GM12878 (cell line): ENCODE measurements at regions of chr1 and their contacts with region 1.

Region 1: DNA sequence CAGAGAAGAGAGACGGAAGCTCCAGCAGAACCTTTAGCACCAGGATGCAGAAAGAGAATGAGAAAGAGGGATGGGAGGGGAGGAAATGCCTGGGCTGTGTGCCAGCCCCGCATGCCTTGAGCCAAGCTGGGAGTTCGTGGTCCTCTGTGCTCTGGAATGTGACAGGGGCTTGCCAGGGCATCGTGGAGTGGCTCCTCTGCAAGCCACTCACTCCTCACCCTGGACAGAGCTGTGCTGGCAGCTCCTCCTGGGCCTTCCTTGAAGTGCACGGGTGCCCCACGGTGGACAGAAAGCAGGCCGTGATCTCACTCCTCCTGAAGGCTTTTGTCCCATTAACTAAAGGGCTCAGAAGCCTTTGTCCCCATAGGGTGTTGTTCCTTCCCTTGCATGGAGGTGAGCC is 34.8 kb upstream of the PRELP start:
- DNase-seq: no peak
- ATAC-seq: peak; percentile 95
- H3K4me3 ChIP-seq: no peak overlapping the region
- H3K27ac ChIP-seq: no peak overlapping the region
- H3K4me1 ChIP-seq: no peaks in the 10 kb centered on the region
- H3K27me3 ChIP-seq: peaks cover 0 to 3% of the 10 kb centered on the region in 2 experiments; a peak in 2 of 4 replicates
- CTCF ChIP-seq: peak; percentile 31 to 77 (median 52); a peak in 4 of 6 replicates
- EP300 ChIP-seq: no peak
- POLR2A ChIP-seq: no peak
- RAD21 ChIP-seq: peak; percentile 82

Region 2: GRCh38 chr1:203361945-203362719 is 78.6 kb before region 1 on chr1:
- CTCF ChIA-PET with region 1: interaction called, 31 read pairs
- POLR2A ChIA-PET with region 1: interaction called, 3 read pairs
- RAD21 ChIA-PET with region 1: interaction called, 20 read pairs
- SMC1A ChIA-PET with region 1: interaction called, 26 read pairs
- in situ Hi-C with region 1: no loop called
- intact Hi-C with region 1: no loop called
- DNase-seq: no peak
- ATAC-seq: peak; percentile 91
- H3K4me3 ChIP-seq: no peak overlapping the region
- H3K27ac ChIP-seq: no peak overlapping the region
- H3K4me1 ChIP-seq: no peaks in the 10 kb centered on the region
- H3K27me3 ChIP-seq: peaks cover 0 to 5% of the 10 kb centered on the region in 2 experiments; a peak in 3 of 4 replicates
- CTCF ChIP-seq: no peak
- EP300 ChIP-seq: no peak
- POLR2A ChIP-seq: no peak
- RAD21 ChIP-seq: no peak

Region 3: GRCh38 chr1:203428981-203429599 is 11.7 kb before region 1 on chr1:
- CTCF ChIA-PET with region 1: interaction called, 18 read pairs
- POLR2A ChIA-PET with region 1: no interaction called
- RAD21 ChIA-PET with region 1: interaction called, 23 read pairs
- SMC1A ChIA-PET with region 1: interaction called, 14 read pairs
- in situ Hi-C with region 1: no loop called
- intact Hi-C with region 1: no loop called
- DNase-seq: peak; percentile 70
- ATAC-seq: peak; percentile 97
- H3K4me3 ChIP-seq: no peak overlapping the region
- H3K27ac ChIP-seq: peak overlapping the region; percentile 70
- H3K4me1 ChIP-seq: peaks cover 13% of the 10 kb centered on the region
- H3K27me3 ChIP-seq: no peaks in the 10 kb centered on the region
- CTCF ChIP-seq: no peak
- EP300 ChIP-seq: peak in 1 of 2 experiments; percentile 48; a peak in 1 of 4 replicates
- POLR2A ChIP-seq: 0 out of 2 replicates have a peak, but pooled peaks have one; percentile 22
- RAD21 ChIP-seq: no peak

Region 4: DNA sequence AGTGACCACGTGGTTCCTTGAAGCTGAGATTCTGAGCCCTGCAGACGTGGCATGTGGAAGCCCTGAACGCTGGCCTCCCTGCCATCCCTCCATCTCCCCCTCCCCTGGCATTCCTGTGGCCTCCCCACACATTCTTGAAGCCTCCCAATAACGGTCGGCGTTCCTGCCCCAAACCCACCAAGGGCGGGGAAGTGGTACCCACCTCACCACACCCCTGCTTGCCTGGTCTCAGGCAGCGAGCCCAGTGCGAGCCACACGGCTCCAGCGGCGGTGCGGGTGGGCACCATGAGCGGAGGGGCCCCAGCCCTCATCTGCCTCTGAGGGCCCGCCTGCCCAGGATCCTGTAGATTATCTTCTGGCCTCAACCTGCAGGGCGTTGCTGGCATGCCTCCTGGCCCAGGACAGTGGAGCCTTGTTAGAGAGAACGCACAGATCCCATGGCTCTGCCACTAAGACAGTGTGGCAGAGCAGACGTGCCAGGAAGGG is 14.3 kb after region 1 on chr1:
- CTCF ChIA-PET with region 1: interaction called, 17 read pairs
- POLR2A ChIA-PET with region 1: no interaction called
- RAD21 ChIA-PET with region 1: interaction called, 5 read pairs
- SMC1A ChIA-PET with region 1: interaction called, 10 read pairs
- in situ Hi-C with region 1: no loop called
- intact Hi-C with region 1: no loop called
- DNase-seq: no peak
- ATAC-seq: no peak
- H3K4me3 ChIP-seq: no peak overlapping the region
- H3K27ac ChIP-seq: no peak overlapping the region
- H3K4me1 ChIP-seq: peaks cover 3% of the 10 kb centered on the region; the same call in 1 of the 2 replicates
- H3K27me3 ChIP-seq: no peaks in the 10 kb centered on the region
- CTCF ChIP-seq: no peak
- EP300 ChIP-seq: no peak
- POLR2A ChIP-seq: no peak
- RAD21 ChIP-seq: no peak

Region 5: GRCh38 chr1:203475012-203475981 is 34.5 kb after region 1 on chr1 and contains the start of gene PRELP:
- CTCF ChIA-PET with region 1: interaction called, 13 read pairs
- POLR2A ChIA-PET with region 1: interaction called, 4 read pairs
- RAD21 ChIA-PET with region 1: no interaction called
- SMC1A ChIA-PET with region 1: interaction called, 7 read pairs
- in situ Hi-C with region 1: no loop called
- intact Hi-C with region 1: no loop called
- DNase-seq: no peak
- ATAC-seq: no peak
- H3K4me3 ChIP-seq: no peak within 1 kb of the TSS
- H3K27ac ChIP-seq: no peak within 1 kb of the TSS
- H3K4me1 ChIP-seq: peaks cover 9% of the 10 kb centered on the region; the same call in 1 of the 2 replicates
- H3K27me3 ChIP-seq: peaks cover 2 to 6% of the 10 kb centered on the region in 2 experiments; a peak in 2 of 4 replicates
- CTCF ChIP-seq: no peak
- EP300 ChIP-seq: no peak
- POLR2A ChIP-seq: no peak
- RAD21 ChIP-seq: no peak
- polyA plus RNA-seq, gene PRELP: not detected

Region 6: DNA sequence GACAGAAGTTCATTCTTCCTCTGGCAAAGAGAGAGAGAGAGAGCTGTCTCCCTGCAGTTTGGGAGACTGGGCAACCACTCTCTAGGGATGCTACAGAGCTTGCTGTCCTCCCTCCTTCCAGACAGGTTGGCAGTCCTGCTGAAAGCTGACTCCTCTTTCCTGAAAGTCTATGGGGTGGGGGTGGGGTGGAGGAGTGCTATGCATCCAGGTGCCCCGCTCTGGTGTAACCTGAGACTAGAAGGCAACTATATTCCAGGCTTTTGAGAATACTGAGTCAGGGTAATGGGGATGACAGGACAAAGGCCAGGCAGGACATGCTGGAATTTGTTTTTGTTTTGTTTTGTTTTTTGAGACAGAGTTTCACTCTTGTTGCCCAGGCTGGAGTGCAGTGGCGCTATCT is 108.5 kb after region 1 on chr1:
- CTCF ChIA-PET with region 1: no interaction called
- POLR2A ChIA-PET with region 1: no interaction called
- RAD21 ChIA-PET with region 1: no interaction called
- SMC1A ChIA-PET with region 1: no interaction called
- in situ Hi-C with region 1: no loop called
- intact Hi-C with region 1: no loop called
- DNase-seq: no peak
- ATAC-seq: no peak
- H3K4me3 ChIP-seq: no peak overlapping the region
- H3K27ac ChIP-seq: no peak overlapping the region
- H3K4me1 ChIP-seq: no peaks in the 10 kb centered on the region
- H3K27me3 ChIP-seq: no peaks in the 10 kb centered on the region; a peak in 1 of 4 replicates
- CTCF ChIP-seq: no peak
- EP300 ChIP-seq: no peak
- POLR2A ChIP-seq: no peak
- RAD21 ChIP-seq: no peak